ENCODE measurements at regions of chr12 and their contacts with region 1.

Region 1: DNA sequence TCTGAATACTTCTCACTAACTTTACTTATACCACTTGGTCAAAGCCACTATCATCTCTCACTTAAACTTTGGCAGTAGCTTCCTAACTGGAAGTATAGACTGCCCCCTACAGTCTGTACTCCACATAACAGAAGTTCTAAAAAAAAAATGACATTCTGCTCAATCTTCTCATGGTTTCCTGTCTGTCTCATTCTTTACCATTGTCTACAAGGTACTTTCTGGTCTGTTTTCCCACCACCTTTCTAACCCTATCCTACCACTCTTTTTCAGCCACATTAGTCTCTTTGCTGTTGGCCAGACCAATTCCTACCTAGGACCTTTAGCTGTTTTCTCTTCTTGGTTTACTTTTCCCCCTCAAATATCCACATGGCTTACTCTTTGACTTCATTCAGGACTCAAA is 14.7 kb downstream of the CPSF6 start:
- DNase-seq: no peak
- ATAC-seq: peak; percentile 69
- H3K4me3 Mint-ChIP-seq: no peak overlapping the region
- H3K27ac Mint-ChIP-seq: peak overlapping the region; percentile 77
- H3K4me1 Mint-ChIP-seq: peaks cover 24% of the 10 kb centered on the region
- H3K27me3 Mint-ChIP-seq: no peaks in the 10 kb centered on the region

Region 2: GRCh38 chr12:69091442-69092017 is 162.5 kb before region 1 on chr12:
- CTCF ChIA-PET with region 1: no interaction called
- POLR2A ChIA-PET with region 1: no interaction called
- DNase-seq: no peak
- ATAC-seq: no peak
- H3K4me3 Mint-ChIP-seq: no peak overlapping the region
- H3K27ac Mint-ChIP-seq: no peak overlapping the region
- H3K4me1 Mint-ChIP-seq: no peaks in the 10 kb centered on the region
- H3K27me3 Mint-ChIP-seq: peaks cover 22% of the 10 kb centered on the region

Region 3: DNA sequence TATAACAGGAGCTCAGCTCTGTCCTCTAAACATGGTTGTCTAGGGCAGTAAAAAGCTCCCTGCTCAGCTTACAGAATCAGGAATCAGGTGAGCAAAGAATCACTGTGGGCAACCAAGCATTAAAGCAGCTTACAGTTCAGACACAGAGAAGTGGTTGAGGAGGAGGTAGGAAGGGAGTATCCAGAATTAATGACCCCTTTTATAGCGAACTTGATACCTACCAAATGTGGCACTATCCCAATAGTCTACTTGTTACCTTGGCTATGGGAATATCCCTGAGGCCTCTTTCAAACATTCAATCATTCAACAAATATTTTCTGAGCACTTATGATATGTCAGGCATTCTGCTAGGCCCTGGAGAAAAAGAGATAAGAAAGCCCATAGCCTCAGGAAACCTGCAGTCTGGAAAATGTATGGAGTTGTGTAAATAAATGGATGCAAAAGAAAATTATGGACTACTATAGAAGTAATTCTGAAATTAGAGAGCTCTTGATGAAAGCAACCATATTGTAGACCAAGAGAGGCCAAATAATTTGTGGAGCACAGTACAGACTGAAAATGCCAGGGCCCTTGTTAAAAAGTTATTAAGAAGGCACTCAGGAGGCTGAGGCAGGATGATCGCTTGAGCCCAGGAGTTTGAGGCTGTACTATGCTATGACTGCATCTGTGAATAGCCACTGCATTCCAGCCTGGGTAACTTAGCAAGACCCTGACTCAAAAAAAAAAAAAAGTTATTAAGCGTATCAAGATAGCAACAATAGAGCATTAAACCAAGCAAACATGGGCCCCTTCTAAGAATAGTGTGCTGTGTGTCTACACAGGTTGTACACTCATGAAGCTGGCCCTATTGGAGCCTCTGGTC is 148.7 kb before region 1 on chr12:
- CTCF ChIA-PET with region 1: no interaction called
- POLR2A ChIA-PET with region 1: no interaction called
- DNase-seq: no peak
- ATAC-seq: no peak
- H3K4me3 Mint-ChIP-seq: no peak overlapping the region
- H3K27ac Mint-ChIP-seq: no peak overlapping the region
- H3K4me1 Mint-ChIP-seq: peaks cover 3% of the 10 kb centered on the region
- H3K27me3 Mint-ChIP-seq: peaks cover 5% of the 10 kb centered on the region

Region 4: DNA sequence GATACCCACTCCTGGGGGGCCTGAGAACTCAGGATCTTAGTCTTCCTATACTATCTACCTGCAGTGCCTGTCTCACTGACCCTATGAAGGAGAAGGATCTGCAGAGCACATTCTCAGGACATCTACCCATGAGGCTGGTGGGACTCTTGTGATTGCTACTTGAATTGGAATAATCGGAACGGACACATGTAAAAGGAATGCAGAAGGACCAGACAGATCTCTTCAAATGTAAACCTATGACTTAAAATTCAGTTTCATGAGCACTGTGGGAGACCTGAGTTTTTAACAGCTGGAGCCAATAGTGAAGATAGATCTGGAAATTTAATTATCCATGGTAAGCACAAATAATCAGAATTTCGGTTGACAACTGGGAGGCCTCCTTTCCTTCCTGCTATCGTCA is 49.9 kb before region 1 on chr12:
- CTCF ChIA-PET with region 1: no interaction called
- POLR2A ChIA-PET with region 1: no interaction called
- DNase-seq: no peak
- ATAC-seq: no peak
- H3K4me3 Mint-ChIP-seq: no peak overlapping the region
- H3K27ac Mint-ChIP-seq: no peak overlapping the region
- H3K4me1 Mint-ChIP-seq: no peaks in the 10 kb centered on the region
- H3K27me3 Mint-ChIP-seq: no peaks in the 10 kb centered on the region

Region 5: GRCh38 chr12:69239352-69239921 is 14.6 kb before region 1 on chr12 and contains the start of gene CPSF6:
- CTCF ChIA-PET with region 1: interaction called, 41 read pairs
- POLR2A ChIA-PET with region 1: interaction called, 5 read pairs
- DNase-seq: peak; percentile 97
- ATAC-seq: peak; percentile 92
- H3K4me3 Mint-ChIP-seq: peak within 1 kb of the TSS; percentile 93
- H3K27ac Mint-ChIP-seq: peak within 1 kb of the TSS; percentile 97
- H3K4me1 Mint-ChIP-seq: peaks cover 45% of the 10 kb centered on the region
- H3K27me3 Mint-ChIP-seq: no peaks in the 10 kb centered on the region
- total RNA-seq, gene CPSF6: 95.6 to 97.8 TPM

Region 6: DNA sequence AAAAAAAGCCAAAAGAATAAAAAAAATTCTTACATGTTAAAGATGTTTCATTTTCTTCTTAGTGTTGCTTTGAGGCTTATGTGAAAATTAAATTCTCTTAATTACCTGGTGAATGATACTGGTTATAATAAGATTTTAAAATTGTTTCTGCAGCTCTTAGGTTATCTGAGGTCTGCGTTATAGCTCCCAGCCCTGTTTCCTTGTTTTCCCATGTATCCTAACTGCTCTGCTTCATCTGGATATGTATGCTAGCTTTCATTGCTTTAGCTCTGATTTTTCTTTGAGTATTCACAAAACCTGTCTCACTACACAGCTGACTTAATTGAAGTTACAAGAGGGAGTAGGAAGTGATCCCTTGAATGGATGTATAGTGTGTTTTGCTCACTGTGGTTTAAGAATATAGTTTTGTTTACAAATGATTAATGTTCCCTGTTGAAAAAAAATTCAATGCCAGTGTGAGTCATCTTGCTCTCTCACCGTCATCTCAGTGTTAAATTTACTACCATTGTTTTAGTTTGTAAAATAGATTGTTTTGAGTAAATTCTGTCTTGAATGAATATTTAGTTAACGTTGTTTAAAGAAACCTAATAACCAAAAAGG is 12.1 kb after region 1 on chr12:
- CTCF ChIA-PET with region 1: interaction called, 31 read pairs
- POLR2A ChIA-PET with region 1: no interaction called
- DNase-seq: no peak
- ATAC-seq: no peak
- H3K4me3 Mint-ChIP-seq: no peak overlapping the region
- H3K27ac Mint-ChIP-seq: no peak overlapping the region
- H3K4me1 Mint-ChIP-seq: peaks cover 3% of the 10 kb centered on the region
- H3K27me3 Mint-ChIP-seq: no peaks in the 10 kb centered on the region

Region 7: DNA sequence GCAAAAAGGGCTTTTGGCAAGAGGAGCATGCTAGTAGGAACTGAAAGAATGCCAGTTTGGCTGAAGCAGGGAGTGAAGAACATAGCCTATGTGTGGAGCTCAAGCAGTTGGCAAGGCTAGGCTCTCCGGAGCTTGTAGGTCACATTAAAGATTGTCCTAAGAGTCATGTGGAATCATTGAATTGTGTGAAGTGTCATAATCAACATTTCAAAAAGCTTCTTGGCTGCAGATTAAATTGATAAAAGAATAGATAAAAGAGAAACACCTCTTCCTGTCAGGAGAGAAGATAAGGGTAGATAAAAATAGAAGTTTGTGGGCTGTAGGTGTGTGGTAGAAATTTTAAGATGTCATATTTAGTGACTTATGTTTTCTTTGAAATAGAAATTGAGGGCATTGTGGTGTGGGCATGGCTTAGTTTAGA is 21.4 kb after region 1 on chr12:
- CTCF ChIA-PET with region 1: interaction called, 15 read pairs
- POLR2A ChIA-PET with region 1: no interaction called
- DNase-seq: no peak
- ATAC-seq: peak; percentile 84
- H3K4me3 Mint-ChIP-seq: peak overlapping the region; percentile 36
- H3K27ac Mint-ChIP-seq: peak overlapping the region; percentile 26
- H3K4me1 Mint-ChIP-seq: peaks cover 36% of the 10 kb centered on the region
- H3K27me3 Mint-ChIP-seq: no peaks in the 10 kb centered on the region

Region 8: DNA sequence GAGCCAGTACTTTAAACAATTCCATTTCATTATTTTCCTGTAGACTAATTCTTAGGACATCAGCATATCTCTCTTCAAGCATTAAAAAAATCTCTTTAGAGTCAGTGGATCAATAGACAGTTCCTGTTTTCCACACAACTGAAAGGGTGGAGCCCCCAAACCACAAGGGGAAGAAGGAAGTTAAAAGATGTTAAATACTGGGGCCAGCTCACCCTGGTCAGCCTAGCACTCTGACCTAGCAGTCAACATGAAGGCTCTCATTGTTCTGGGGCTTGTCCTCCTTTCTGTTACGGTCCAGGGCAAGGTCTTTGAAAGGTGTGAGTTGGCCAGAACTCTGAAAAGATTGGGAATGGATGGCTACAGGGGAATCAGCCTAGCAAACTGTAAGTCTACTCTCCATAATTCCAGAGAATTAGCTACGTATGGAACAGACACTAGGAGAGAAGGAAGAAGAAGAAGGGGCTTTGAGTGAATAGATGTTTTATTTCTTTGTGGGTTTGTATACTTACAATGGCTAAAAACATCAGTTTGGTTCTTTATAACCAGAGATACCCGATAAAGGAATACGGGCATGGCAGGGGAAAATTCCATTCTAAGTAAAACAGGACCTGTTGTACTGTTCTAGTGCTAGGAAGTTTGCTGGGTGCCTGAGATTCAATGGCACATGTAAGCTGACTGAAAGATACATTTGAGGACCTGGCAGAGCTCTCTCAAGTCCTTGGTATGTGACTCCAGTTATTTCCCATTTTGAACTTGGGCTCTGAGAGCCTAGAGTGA is 94.3 kb after region 1 on chr12 and contains the start of gene LYZ:
- CTCF ChIA-PET with region 1: no interaction called
- POLR2A ChIA-PET with region 1: no interaction called
- DNase-seq: no peak
- ATAC-seq: no peak
- H3K4me3 Mint-ChIP-seq: no peak within 1 kb of the TSS
- H3K27ac Mint-ChIP-seq: no peak within 1 kb of the TSS
- H3K4me1 Mint-ChIP-seq: peaks cover 5% of the 10 kb centered on the region
- H3K27me3 Mint-ChIP-seq: peaks cover 8% of the 10 kb centered on the region
- total RNA-seq, gene LYZ: not detected